ENCODE measurements at regions of chr1 and their contacts with region 1.

Region 1: DNA sequence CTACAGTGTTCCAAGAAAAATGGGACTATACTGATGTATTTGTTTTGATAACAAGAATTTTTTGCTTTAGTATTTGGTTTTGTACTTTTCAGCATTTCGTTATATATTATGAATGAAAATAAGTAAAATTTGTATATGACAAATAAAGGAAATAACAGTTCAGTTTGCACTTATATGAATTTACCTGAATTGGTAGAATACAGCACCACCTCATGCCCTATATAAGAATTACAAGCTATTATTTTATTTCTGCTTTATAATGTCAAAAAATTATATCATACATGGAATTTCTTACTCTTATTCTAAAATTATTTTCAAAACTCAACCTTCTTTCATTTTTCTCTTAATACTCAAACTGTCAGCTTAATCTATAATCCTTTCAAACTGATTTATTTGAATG is 14.6 kb downstream of the EFCAB7 start:
- DNase-seq: peak; percentile 15
- ATAC-seq: peak; percentile 66
- H3K4me3 ChIP-seq: no peak overlapping the region
- H3K27ac ChIP-seq: no peak overlapping the region
- H3K4me1 ChIP-seq: peaks cover 1% of the 10 kb centered on the region; the same call in 1 of the 2 replicates
- H3K27me3 ChIP-seq: no peaks in the 10 kb centered on the region
- CTCF ChIP-seq: peak; percentile 55
- POLR2A ChIP-seq: no peak
- RAD21 ChIP-seq: peak; percentile 60

Region 2: DNA sequence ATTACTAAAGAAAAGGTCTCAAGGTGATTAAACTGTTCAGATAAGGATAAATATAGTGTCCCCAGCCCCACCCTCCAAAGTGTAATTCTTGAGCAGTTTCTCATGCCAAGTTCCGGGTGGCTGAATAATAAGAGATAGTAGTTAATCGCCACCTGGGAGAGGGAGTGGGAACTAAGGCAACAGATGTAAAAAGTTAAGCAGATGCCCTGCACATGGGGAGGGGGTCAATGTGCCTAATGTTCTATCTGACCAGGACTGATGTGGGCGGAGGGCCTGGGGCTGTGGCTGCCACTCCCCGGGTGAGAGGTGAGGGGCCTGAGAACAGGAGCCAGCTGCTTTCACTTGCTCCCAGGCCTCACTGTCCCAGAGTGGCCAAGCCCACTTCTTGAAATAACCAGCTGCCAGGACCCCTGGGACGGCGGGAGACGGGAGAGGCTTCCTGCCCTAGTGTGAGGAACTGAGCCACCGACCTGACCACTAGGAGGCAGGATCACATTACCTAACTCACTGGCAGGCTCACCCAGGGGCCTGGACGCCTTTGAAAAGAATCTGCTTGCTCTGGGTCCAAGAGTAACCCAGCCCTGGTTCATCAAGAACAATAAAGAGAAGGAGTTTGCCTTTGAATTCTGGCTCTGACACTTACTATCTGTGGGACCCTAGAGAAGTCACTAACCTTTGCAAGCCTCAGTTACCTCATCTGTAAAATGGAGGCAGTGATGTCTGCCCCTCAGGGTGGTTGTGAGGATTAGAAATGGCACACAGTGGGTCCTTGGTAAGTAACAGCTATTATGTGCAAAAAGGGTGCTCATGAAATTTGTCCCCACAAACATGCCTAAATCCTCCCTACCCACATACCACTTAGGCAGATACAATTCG is 574.8 kb before region 1 on chr1:
- CTCF ChIA-PET with region 1: no interaction called
- POLR2A ChIA-PET with region 1: no interaction called
- dilution Hi-C with region 1: no loop called
- in situ Hi-C with region 1: no loop called
- intact Hi-C with region 1: loop called (anchors 10 kb)
- DNase-seq: peak; percentile 14
- ATAC-seq: peak; percentile 73
- H3K4me3 ChIP-seq: no peak overlapping the region
- H3K27ac ChIP-seq: no peak overlapping the region
- H3K4me1 ChIP-seq: no peaks in the 10 kb centered on the region
- H3K27me3 ChIP-seq: no peaks in the 10 kb centered on the region
- CTCF ChIP-seq: peak; percentile 46
- POLR2A ChIP-seq: no peak
- RAD21 ChIP-seq: peak; percentile 47; the same call in 1 of the 2 replicates